ENCODE measurements at regions of chr9 and their contacts with region 1.

Region 1: DNA sequence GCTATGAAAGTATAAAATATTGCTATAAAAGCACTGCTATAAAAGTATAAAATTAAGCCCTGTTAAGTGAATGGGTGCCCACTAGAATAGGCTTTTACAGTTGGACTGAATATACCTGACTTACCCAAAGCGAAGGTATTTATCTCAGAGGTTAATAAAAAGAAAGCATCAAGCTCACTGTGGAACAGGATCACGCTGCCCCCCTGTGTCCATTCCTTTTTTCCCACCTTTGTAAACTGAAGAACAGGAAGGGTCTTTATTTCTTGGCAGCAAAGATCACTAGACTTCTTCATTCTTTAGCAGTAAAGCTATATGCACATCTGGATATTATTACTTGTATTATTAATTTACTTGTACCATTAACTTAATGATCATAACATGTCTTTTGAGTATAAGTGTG is 22.1 kb upstream of the PLPP6 start:
- DNase-seq: no peak
- H3K4me3 ChIP-seq: no peak overlapping the region
- H3K27ac ChIP-seq: no peak overlapping the region
- H3K4me1 ChIP-seq: no peaks in the 10 kb centered on the region
- H3K27me3 ChIP-seq: no peaks in the 10 kb centered on the region
- CTCF ChIP-seq: peak in 2 of 3 experiments; percentile 54 to 65; a peak in 3 of 4 replicates
- EP300 ChIP-seq: no peak
- POLR2A ChIP-seq: no peak
- RAD21 ChIP-seq: peak; percentile 86 to 87

Region 2: DNA sequence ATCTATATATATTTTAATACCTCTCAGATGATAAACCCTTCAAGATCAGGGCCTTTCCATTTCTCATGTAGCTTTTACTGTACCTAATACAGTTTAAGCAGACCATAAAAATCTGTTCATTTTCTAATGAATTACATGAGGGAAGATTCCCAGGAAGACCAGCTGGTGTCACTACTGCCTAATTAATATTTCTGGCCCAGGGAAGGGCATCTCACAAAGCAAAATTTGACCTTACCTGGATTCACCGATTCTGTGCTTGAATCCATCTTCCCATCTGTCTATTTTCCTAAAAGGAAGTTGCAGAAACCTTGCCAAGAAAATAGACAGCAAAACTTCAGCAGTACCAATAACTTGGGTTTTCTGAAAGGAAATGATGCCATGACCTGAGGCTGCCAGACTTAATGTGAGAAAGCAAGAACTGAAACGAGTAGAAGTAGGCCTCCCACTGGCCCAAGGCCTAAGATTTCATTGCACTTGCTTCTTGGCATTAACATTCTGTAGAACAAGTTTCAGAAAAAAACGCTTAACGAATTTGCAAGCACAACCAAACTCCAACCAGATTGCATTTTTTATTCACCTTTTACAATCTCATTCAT is 257.2 kb before region 1 on chr9:
- CTCF ChIA-PET with region 1: interaction called, 47 read pairs
- POLR2A ChIA-PET with region 1: no interaction called
- DNase-seq: no peak
- H3K4me3 ChIP-seq: no peak overlapping the region
- H3K27ac ChIP-seq: no peak overlapping the region
- H3K4me1 ChIP-seq: no peaks in the 10 kb centered on the region
- H3K27me3 ChIP-seq: no peaks in the 10 kb centered on the region
- CTCF ChIP-seq: peak in 2 of 3 experiments; percentile 65 to 68; a peak in 3 of 4 replicates
- EP300 ChIP-seq: no peak
- POLR2A ChIP-seq: no peak
- RAD21 ChIP-seq: peak; percentile 87 to 90

Region 3: DNA sequence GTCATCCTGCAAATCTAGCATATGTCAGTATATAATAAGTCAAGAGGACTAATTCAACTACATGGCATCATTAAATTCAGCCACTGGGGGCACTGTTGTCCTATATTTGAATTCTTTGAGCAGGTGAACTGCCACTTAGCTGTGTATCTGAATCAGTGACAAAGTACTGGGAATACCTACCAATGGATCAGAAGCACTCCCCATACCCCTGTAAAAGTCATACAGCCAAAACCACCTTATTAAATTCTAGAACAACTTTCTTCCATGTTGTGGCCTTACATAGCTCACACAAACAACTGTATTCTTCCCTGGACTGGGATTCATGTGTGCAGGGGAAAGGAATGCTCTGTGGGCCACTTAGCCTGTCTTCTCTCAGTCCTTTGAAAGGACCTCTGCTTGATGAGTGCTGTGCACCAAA is 35.3 kb before region 1 on chr9:
- CTCF ChIA-PET with region 1: interaction called, 68 read pairs
- POLR2A ChIA-PET with region 1: interaction called, 3 read pairs
- DNase-seq: peak; percentile 43 to 81
- H3K4me3 ChIP-seq: no peak overlapping the region
- H3K27ac ChIP-seq: no peak overlapping the region
- H3K4me1 ChIP-seq: peaks cover 0 to 3% (median 0%) of the 10 kb centered on the region in 4 experiments; a peak in 2 of 7 replicates
- H3K27me3 ChIP-seq: no peaks in the 10 kb centered on the region
- CTCF ChIP-seq: peak in 2 of 3 experiments; percentile 64 to 75; a peak in 3 of 4 replicates
- EP300 ChIP-seq: no peak
- POLR2A ChIP-seq: no peak
- RAD21 ChIP-seq: peak; percentile 79 to 87

Region 4: DNA sequence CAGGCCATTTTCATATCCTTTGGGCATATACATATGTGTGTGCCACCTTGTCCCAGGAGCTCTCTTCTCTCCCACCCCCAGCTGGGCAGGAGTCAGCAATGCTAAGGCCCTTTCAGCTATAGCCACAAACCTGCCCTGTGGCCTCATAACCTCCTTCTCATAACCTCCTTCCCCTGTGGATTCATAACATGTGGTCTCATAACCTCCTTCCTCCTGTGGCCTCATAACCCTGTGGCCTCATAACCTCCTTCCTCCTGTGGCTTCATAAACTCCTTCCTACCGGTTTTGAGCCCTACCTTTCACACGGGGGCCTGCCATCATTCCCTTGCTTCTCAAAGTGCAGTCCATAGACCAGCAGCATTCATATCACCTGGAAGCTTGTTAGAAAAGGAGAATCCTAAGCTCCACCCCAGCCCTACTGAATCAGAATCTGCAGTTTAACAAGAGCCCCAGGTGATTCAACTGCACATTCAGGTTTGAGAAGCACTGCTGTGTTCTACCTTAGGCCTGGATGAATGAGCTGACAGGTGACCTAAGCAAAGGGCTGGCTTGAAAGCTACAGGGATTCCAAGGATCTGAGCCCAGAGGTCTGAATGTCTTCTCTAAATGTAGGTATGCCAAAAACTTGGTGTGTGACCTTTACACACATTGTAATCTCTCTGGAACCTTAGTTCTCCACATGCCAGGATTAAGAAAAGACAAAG is 19.8 kb before region 1 on chr9:
- CTCF ChIA-PET with region 1: interaction called, 10 read pairs
- POLR2A ChIA-PET with region 1: interaction called, 5 read pairs
- DNase-seq: no peak
- H3K4me3 ChIP-seq: no peak overlapping the region
- H3K27ac ChIP-seq: no peak overlapping the region
- H3K4me1 ChIP-seq: peaks cover 6 to 18% (median 8%) of the 10 kb centered on the region in 4 experiments
- H3K27me3 ChIP-seq: no peaks in the 10 kb centered on the region
- CTCF ChIP-seq: no peak
- EP300 ChIP-seq: no peak
- POLR2A ChIP-seq: no peak
- RAD21 ChIP-seq: no peak